ENCODE measurements at regions of chr12 and their contacts with region 1.

Region 1: GRCh38 chr12:3034067-3034750 is 43.0 kb upstream of the TSPAN9 start:
- DNase-seq: peak; percentile 54 to 92
- H3K4me3 ChIP-seq: no peak overlapping the region
- H3K27ac ChIP-seq: no peak overlapping the region
- H3K4me1 ChIP-seq: no peaks in the 10 kb centered on the region; a peak in 3 of 7 replicates
- H3K27me3 ChIP-seq: no peaks in the 10 kb centered on the region
- CTCF ChIP-seq: peak; percentile 78 to 92 (median 88)
- EP300 ChIP-seq: no peak
- POLR2A ChIP-seq: no peak
- RAD21 ChIP-seq: peak; percentile 77 to 83

Region 2: DNA sequence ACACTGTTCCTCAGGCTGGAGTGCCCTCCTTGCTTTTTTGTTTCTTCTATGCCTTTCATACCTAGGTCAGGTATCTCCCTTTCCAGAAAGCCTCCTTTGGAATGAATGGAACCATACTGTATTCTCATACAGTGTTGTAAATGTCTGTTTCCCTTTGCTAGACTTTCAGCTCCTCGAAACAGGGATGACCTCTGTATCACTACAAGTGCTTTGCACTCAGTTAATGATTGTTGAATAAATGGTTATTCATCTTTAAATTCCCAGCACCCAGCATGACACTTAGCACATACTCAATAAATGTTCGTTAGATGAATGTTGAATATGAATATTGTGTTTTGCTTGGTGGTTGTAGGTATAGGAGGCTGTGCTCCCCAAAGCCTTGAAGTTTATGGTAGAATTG is 149.4 kb before region 1 on chr12:
- CTCF ChIA-PET with region 1: interaction called, 21 read pairs
- POLR2A ChIA-PET with region 1: interaction called, 4 read pairs
- DNase-seq: no peak
- H3K4me3 ChIP-seq: no peak overlapping the region
- H3K27ac ChIP-seq: no peak overlapping the region
- H3K4me1 ChIP-seq: peaks cover 0 to 5% (median 0%) of the 10 kb centered on the region in 4 experiments; a peak in 4 of 7 replicates
- H3K27me3 ChIP-seq: no peaks in the 10 kb centered on the region
- CTCF ChIP-seq: no peak
- EP300 ChIP-seq: no peak
- POLR2A ChIP-seq: no peak
- RAD21 ChIP-seq: no peak

Region 3: GRCh38 chr12:2974560-2974971 is 59.6 kb before region 1 on chr12:
- CTCF ChIA-PET with region 1: interaction called, 11 read pairs
- POLR2A ChIA-PET with region 1: no interaction called
- DNase-seq: peak in 1 of 2 experiments; percentile 53
- H3K4me3 ChIP-seq: no peak overlapping the region
- H3K27ac ChIP-seq: no peak overlapping the region
- H3K4me1 ChIP-seq: peaks cover 6 to 23% (median 11%) of the 10 kb centered on the region in 4 experiments
- H3K27me3 ChIP-seq: no peaks in the 10 kb centered on the region
- CTCF ChIP-seq: no peak
- EP300 ChIP-seq: no peak
- POLR2A ChIP-seq: peak in 1 of 2 experiments; percentile 21; a peak in 1 of 3 replicates
- RAD21 ChIP-seq: no peak

Region 4: GRCh38 chr12:3014641-3015040 is 19.6 kb before region 1 on chr12:
- CTCF ChIA-PET with region 1: interaction called, 27 read pairs
- POLR2A ChIA-PET with region 1: interaction called, 5 read pairs
- DNase-seq: no peak
- H3K4me3 ChIP-seq: no peak overlapping the region
- H3K27ac ChIP-seq: no peak overlapping the region
- H3K4me1 ChIP-seq: no peaks in the 10 kb centered on the region; a peak in 1 of 7 replicates
- H3K27me3 ChIP-seq: no peaks in the 10 kb centered on the region
- CTCF ChIP-seq: no peak
- EP300 ChIP-seq: no peak
- POLR2A ChIP-seq: no peak
- RAD21 ChIP-seq: no peak

Region 5: GRCh38 chr12:3110578-3110977 is 76.4 kb after region 1 on chr12:
- CTCF ChIA-PET with region 1: no interaction called
- POLR2A ChIA-PET with region 1: no interaction called
- DNase-seq: no peak
- H3K4me3 ChIP-seq: no peak overlapping the region
- H3K27ac ChIP-seq: no peak overlapping the region
- H3K4me1 ChIP-seq: 0 out of 7 replicates have a peak, but pooled peaks cover 0 to 3% (median under 1%) of the 10 kb centered on the region in 4 experiments
- H3K27me3 ChIP-seq: no peaks in the 10 kb centered on the region
- CTCF ChIP-seq: no peak
- EP300 ChIP-seq: no peak
- POLR2A ChIP-seq: no peak
- RAD21 ChIP-seq: no peak

Region 6: DNA sequence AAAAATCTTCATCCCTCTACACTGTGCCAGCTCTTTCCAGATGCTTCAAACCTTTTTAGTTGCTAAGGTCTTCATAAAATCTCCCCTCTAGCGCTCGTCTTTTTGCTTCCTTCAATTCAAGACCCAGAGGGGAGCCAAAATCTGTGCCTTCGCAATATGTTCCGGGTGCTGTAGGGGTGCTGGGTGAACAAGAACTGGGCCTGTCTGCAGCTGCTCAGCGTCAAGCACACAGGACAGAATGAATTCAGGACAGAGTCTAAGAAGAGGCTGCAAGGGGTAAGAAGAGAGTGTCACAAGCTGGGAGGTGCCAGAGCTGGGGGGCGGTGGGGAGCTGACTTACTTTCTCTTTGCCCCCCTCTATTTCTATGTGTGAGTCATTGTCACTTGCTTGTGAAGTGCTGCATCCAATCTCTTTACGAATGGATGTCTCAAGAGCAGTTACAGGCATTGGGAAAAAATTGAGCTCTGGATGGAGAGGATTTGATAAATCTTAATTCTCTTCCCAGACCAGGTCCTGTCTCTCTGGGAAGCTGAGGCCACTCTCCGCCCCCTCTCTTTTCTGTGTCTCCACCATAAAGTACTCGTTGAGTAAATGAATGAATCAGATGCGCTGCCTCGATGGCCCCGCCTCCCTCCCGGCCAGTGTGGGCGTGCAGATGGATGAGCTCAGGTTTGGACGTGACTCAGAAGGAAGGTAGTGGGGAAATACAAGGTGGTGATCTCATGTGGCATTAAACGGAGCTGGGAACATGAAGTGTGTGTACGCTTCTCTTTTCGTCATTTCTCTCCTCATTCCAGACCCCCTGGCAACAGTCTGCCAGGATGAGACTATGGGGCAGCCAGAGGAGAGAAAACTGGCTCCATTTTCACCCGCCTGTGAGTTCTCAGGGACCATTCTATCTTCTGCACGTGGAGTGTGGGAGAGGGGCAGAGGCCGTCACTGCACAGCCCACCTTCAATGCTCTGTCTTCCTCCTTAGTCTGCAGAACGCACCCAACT is 134.3 kb after region 1 on chr12:
- CTCF ChIA-PET with region 1: no interaction called
- POLR2A ChIA-PET with region 1: no interaction called
- DNase-seq: peak in 1 of 2 experiments; percentile 33
- H3K4me3 ChIP-seq: no peak overlapping the region
- H3K27ac ChIP-seq: no peak overlapping the region
- H3K4me1 ChIP-seq: peaks cover 8 to 23% (median 19%) of the 10 kb centered on the region in 4 experiments
- H3K27me3 ChIP-seq: no peaks in the 10 kb centered on the region
- CTCF ChIP-seq: no peak
- EP300 ChIP-seq: no peak
- POLR2A ChIP-seq: no peak
- RAD21 ChIP-seq: no peak

Measured in H1 (cell line).